ENCODE measurements at regions of chr1 and their contacts with region 1.

Region 1: DNA sequence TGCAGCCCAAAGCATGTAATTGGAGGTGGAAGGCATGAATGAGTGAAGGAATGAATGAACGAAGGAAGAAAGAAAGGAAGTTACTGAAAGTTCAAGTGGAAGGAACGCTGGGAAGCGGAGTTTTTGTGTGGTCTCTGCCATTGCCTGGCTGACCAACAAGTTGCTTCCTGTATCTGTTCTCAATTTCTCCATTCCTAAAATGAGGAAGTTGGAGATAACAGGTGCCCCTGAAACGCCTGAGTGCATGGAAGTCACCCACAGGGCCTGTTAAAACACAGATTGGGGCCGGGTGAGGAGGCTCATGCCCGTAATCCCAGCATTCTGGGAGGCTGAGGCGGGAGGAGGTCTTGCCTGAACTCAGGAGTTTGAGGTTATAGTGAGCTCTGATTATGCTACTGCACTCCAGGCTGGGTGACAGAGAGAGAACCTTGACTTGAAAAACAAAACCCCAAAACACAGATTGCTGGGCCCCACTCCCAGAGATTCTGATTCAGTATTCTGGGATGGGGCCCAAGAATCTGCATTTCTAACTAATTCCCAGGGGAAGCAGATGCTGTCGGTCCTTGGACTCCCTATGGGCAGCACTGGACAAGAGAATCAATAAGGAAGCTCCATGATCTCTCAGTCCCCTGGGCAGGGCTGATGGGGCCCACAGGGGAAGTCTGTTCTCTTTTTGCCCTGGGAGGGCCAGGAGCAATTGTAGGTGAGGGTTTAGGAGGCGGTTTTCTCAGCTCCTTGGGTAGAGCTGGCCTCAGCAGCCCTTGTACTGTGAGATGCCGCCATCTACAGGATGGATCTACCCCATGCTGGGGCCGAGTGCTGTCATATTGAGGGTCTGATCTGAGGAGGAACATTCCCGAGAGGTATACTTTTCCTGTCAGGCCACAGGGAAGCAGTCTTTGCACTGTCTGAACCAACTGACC is 3.3 kb upstream of the CNR2 start:
- DNase-seq: no peak
- H3K4me3 ChIP-seq: no peak overlapping the region
- H3K27me3 ChIP-seq: 0 out of 2 replicates have a peak, but pooled peaks cover 1% of the 10 kb centered on the region
- CTCF ChIP-seq: peak; percentile 72

Region 2: GRCh38 chr1:23777979-23778814 is 138.3 kb before region 1 on chr1 and contains the start of gene PITHD1:
- CTCF ChIA-PET with region 1: interaction called, 23 read pairs
- POLR2A ChIA-PET with region 1: interaction called, 4 read pairs
- DNase-seq: peak; percentile 29
- H3K4me3 ChIP-seq: peak within 1 kb of the TSS; percentile 69
- H3K27me3 ChIP-seq: no peaks in the 10 kb centered on the region
- CTCF ChIP-seq: no peak
- polyA plus RNA-seq, gene PITHD1: 33.7 and 35.2 TPM in 2 replicates

Region 3: DNA sequence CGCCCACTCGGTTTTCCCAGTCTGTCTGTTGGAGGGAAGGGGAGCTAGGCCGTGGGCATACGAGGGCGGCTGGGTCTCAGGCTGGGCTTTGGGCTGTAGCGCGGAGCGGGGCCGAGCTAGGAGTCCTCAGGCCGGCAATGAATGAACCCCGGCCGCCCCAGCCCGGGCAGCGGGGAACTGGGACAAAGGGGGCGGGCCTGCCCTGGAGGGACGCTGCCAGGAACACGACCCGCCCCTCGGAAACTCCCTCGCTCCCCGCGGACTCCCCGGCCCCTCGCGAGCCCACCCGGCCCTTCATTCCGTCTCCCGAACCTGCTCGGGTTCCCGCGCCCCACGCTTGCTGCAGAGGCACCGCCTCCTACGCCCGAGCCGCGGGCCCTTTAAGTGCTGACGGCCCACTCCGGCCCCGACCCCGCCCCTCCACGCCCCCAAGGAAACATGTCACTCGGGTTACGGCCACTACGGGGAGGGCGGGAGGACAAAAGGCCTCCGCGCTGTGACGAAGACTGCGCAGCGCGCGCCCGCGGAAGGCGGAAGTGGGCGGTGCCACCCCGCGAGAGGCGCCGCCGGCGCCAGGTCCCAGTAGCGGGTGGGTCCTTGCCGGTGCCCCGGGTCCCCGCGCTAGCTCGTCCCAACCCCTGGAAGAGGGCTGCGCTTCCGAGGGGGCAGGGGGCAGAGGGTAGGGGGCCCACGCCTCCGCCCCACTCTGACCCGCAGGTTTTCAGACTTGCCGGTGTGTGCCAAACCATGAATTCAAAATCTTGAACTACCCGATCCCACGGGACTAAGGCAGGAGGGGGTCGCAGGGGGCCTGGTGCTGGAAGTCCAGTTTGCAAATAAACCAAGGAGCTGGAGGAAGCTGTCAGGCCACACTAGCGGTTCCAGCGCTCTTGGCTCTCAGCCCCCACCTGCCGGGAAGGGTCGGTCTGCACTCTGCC is 115.8 kb before region 1 on chr1 and contains the start of gene GALE:
- CTCF ChIA-PET with region 1: interaction called, 10 read pairs
- POLR2A ChIA-PET with region 1: no interaction called
- DNase-seq: peak; percentile 60
- H3K4me3 ChIP-seq: peak within 1 kb of the TSS; percentile 75
- H3K27me3 ChIP-seq: no peaks in the 10 kb centered on the region
- CTCF ChIP-seq: no peak
- polyA plus RNA-seq, gene GALE: 23.8 and 36.1 TPM in 2 replicates

Region 4: GRCh38 chr1:23809751-23810171 is 106.7 kb before region 1 on chr1:
- CTCF ChIA-PET with region 1: interaction called, 12 read pairs
- POLR2A ChIA-PET with region 1: no interaction called
- DNase-seq: no peak
- H3K4me3 ChIP-seq: no peak overlapping the region
- H3K27me3 ChIP-seq: no peaks in the 10 kb centered on the region
- CTCF ChIP-seq: peak; percentile 88